GM12878 (cell line): ENCODE measurements at regions of chr1 and their contacts with region 1.

Region 1: GRCh38 chr1:202728951-202729350 is 18.7 kb upstream of the SYT2 start:
- DNase-seq: no peak
- ATAC-seq: peak; percentile 60
- H3K4me3 ChIP-seq: no peak overlapping the region
- H3K27ac ChIP-seq: no peak overlapping the region
- H3K4me1 ChIP-seq: no peaks in the 10 kb centered on the region
- H3K27me3 ChIP-seq: no peaks in the 10 kb centered on the region
- CTCF ChIP-seq: no peak
- EP300 ChIP-seq: no peak
- POLR2A ChIP-seq: no peak
- RAD21 ChIP-seq: no peak

Region 2: GRCh38 chr1:202649553-202650392 is 79.2 kb before region 1 on chr1:
- CTCF ChIA-PET with region 1: no interaction called
- POLR2A ChIA-PET with region 1: no interaction called
- RAD21 ChIA-PET with region 1: no interaction called
- SMC1A ChIA-PET with region 1: no interaction called
- in situ Hi-C with region 1: no loop called
- intact Hi-C with region 1: no loop called
- DNase-seq: no peak
- ATAC-seq: no peak
- H3K4me3 ChIP-seq: no peak overlapping the region
- H3K27ac ChIP-seq: no peak overlapping the region
- H3K4me1 ChIP-seq: no peaks in the 10 kb centered on the region
- H3K27me3 ChIP-seq: peaks cover 0 to 4% of the 10 kb centered on the region in 2 experiments; a peak in 2 of 4 replicates
- CTCF ChIP-seq: no peak
- EP300 ChIP-seq: no peak
- POLR2A ChIP-seq: no peak
- RAD21 ChIP-seq: no peak

Region 3: DNA sequence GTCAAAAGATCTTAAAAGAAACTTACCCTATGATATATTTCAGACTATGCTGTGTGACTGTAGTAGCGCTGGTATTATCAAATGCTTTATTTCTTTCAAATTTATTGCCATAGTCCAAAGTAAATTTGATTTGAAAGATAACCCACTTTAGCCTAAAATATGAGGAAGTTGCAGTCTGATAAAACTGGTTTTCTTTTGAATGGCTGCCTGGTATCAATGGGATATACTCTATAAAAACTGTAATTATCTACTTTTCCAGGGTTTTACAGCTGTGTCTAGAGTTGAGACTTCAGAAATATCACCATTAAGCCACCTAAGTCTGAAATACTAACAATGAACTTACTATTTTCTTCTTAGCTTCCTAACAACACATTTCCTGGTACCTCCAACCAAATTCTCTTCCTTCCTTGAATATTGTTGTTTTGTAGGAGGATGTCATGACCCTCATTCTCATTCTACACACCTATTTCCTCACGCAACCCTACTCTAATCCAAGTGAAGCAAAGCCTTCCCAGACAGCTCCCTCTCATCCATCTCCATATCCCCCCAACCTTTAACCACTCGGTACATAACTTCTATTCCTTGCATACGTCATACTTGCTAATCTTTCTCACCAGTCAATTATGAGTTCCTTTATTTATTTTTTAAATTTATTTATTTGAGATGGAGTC is 62.3 kb after region 1 on chr1:
- CTCF ChIA-PET with region 1: no interaction called
- POLR2A ChIA-PET with region 1: interaction called, 3 read pairs
- RAD21 ChIA-PET with region 1: no interaction called
- SMC1A ChIA-PET with region 1: interaction called, 3 read pairs
- in situ Hi-C with region 1: no loop called
- intact Hi-C with region 1: loop called (anchors 10 kb)
- DNase-seq: no peak
- ATAC-seq: no peak
- H3K4me3 ChIP-seq: no peak overlapping the region
- H3K27ac ChIP-seq: no peak overlapping the region
- H3K4me1 ChIP-seq: no peaks in the 10 kb centered on the region
- H3K27me3 ChIP-seq: no peaks in the 10 kb centered on the region
- CTCF ChIP-seq: no peak
- EP300 ChIP-seq: no peak
- POLR2A ChIP-seq: no peak
- RAD21 ChIP-seq: no peak